ENCODE measurements at regions of chr13 and their contacts with region 1.

Region 1: DNA sequence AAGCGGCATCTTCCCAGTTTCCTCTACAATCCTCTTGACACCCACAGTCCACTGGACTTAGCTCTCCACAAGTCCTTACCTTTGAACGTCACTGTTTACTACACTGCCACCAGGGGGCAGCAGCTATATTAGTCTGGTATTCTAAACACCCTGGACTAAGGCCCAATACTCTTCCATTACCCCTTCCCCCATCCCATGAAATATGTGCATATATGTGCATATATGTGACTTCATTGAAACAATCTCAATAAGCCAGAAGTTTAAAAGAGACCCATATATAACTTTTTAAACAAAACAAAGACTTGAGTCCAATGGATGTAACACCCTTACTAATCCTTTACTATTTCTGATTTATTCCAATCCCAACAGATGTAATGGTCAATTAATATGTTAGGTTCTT is 15.5 kb downstream of the GGACT start:
- DNase-seq: peak; percentile 58
- H3K4me3 ChIP-seq: no peak overlapping the region
- H3K27ac ChIP-seq: no peak overlapping the region
- H3K4me1 ChIP-seq: no peaks in the 10 kb centered on the region
- H3K27me3 ChIP-seq: no peaks in the 10 kb centered on the region
- CTCF ChIP-seq: peak; percentile 75
- EP300 ChIP-seq: no peak
- RAD21 ChIP-seq: peak; percentile 67

Region 2: DNA sequence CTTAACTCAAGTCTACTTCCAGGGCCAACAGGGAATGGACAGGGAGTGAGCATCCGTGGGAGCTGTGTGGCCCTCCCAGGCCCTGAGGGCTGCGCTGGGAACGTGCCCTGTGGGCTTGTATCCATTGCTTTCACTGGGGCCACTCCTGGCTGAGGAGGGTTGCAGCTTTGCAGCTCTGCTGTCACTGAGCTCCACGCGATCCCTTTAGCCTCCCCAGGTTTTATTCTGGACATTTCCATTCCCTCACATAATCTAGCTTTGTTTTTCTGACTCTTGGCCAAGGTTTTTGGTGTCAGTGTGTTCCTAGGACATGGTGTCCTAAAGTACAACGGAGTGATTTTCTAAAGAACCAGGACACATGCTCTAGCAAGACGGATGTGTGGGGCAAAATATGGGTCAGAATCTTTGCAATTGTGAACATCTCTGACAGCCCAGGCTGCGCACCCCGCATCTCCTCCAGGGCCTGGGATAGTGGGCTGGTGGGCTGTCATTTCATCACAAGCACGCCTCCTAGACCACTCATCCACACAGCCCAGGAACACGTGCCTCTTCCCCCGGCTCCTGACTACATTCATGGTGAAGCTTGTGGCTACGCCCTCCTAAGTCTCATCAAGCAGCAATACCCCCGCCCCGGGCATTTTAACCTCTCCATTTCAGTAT is 12.5 kb before region 1 on chr13:
- CTCF ChIA-PET with region 1: interaction called, 10 read pairs
- POLR2A ChIA-PET with region 1: no interaction called
- DNase-seq: no peak
- H3K4me3 ChIP-seq: no peak overlapping the region
- H3K27ac ChIP-seq: no peak overlapping the region
- H3K4me1 ChIP-seq: no peaks in the 10 kb centered on the region; a peak in 1 of 4 replicates
- H3K27me3 ChIP-seq: no peaks in the 10 kb centered on the region
- CTCF ChIP-seq: no peak
- EP300 ChIP-seq: no peak
- RAD21 ChIP-seq: no peak

Region 3: DNA sequence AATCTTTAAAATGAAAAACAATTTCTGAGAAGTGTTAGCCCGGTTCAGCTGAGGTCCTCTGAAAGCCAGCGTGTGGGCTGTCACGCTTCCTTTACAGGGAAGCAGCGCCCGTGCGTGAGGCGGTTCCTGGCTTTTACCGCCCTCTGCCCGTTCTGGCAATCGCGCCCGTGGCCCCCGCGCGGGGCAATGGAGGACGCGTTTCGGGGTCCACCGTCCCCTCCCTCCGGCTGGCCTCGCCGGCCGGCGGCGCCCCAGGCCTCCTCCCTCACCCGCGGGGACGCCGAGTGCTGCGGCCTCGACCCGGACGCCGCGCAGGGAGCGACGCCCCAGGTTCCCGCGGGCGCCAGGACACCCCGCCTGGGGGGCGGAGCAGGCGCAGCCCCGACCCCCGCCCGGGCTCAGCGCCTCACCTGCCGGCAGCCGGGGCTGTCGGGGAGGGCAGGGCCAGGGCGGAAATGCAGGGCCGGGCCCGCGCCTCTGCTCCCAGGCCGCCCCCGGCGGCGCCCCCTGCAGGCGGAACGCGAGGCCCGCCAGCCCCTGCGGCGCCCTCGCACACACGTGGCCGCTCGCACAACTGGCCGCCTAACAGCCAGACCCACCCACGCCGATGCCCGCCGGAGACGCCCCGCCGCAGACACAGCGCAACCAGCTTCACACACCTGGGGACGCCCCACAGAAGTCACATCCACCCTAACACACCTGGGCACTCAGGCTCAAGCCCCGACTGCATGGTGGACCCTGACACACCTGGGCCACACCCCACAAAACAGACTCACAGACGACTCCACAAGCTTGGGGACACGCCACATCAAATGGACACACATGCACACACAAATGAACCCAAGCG is 15.4 kb after region 1 on chr13 and contains the start of gene GGACT:
- CTCF ChIA-PET with region 1: interaction called, 30 read pairs
- POLR2A ChIA-PET with region 1: no interaction called
- DNase-seq: peak; percentile 95
- H3K4me3 ChIP-seq: peak within 1 kb of the TSS; percentile 72 to 74
- H3K27ac ChIP-seq: peak within 1 kb of the TSS in 1 of 2 experiments; percentile 5; a peak in 1 of 4 replicates
- H3K4me1 ChIP-seq: peaks cover 0 to 5% of the 10 kb centered on the region in 2 experiments; a peak in 1 of 4 replicates
- H3K27me3 ChIP-seq: no peaks in the 10 kb centered on the region
- CTCF ChIP-seq: peak; percentile 65
- EP300 ChIP-seq: no peak
- RAD21 ChIP-seq: no peak
- polyA plus RNA-seq, gene GGACT: 5.4 and 7.1 TPM in 2 replicates

Region 4: DNA sequence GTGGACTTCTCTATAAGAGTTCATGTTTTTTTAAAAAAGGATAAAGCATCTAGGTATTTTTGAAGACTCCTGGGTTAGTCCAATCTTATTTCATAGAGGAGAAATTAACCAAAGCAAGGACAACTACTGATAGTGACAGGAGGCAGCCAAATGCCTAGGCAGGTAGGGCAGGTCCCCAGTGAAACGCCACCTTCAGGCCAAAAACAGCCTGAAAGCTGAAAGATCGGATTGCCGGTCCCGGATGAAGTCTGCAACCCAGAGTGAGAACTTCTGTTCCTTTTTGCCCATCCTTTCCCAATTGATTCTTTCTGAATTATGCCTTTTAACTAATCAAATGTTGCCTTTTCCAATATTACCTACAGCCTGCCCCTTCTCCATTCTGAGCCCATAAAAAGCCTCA is 21.6 kb after region 1 on chr13:
- CTCF ChIA-PET with region 1: interaction called, 30 read pairs
- POLR2A ChIA-PET with region 1: no interaction called
- DNase-seq: no peak
- H3K4me3 ChIP-seq: no peak overlapping the region
- H3K27ac ChIP-seq: no peak overlapping the region
- H3K4me1 ChIP-seq: no peaks in the 10 kb centered on the region
- H3K27me3 ChIP-seq: no peaks in the 10 kb centered on the region
- CTCF ChIP-seq: peak; percentile 20
- EP300 ChIP-seq: no peak
- RAD21 ChIP-seq: no peak

Region 5: GRCh38 chr13:100680131-100680530 is 107.0 kb after region 1 on chr13:
- CTCF ChIA-PET with region 1: no interaction called
- POLR2A ChIA-PET with region 1: no interaction called
- DNase-seq: no peak
- H3K4me3 ChIP-seq: no peak overlapping the region
- H3K27ac ChIP-seq: no peak overlapping the region
- H3K4me1 ChIP-seq: peaks cover 0 to 4% of the 10 kb centered on the region in 2 experiments; a peak in 1 of 4 replicates
- H3K27me3 ChIP-seq: 0 out of 2 replicates have a peak, but pooled peaks cover 6% of the 10 kb centered on the region
- CTCF ChIP-seq: no peak
- EP300 ChIP-seq: no peak
- RAD21 ChIP-seq: no peak

Region 6: DNA sequence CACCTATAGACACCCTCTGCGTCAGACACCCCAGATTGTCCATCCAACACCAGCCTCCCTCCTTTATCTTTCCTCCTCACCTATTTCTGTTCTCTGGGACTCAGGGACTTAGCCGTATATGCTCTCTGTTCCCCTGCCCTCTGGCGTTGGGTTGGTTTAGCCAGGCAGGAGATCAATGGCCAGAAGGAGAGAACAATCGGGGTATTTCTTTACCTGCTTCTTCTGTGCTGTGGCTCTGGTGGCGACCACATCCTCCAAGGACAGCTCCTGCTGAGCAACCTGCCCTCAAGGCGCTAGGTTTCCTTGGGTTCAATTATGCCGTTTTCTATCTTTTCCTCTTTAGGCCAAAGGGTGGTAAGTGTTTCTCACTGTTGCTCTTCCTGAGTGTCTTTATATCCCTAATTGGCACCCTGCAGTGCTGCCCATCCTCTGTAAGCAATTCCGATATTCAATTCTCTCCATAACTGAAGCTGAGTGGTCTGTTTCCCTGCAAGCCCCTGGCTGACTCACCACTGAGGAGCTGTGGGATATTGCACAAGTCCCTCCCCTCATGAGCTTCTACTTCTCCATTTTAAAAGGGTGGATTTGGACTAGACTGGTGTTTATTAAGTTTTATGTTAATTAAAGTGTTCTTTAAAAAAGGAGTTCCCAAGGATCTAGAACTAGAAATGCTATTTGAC is 165.2 kb after region 1 on chr13:
- CTCF ChIA-PET with region 1: no interaction called
- POLR2A ChIA-PET with region 1: no interaction called
- DNase-seq: no peak
- H3K4me3 ChIP-seq: no peak overlapping the region
- H3K27ac ChIP-seq: no peak overlapping the region
- H3K4me1 ChIP-seq: no peaks in the 10 kb centered on the region
- H3K27me3 ChIP-seq: no peaks in the 10 kb centered on the region; the same call in 1 of the 2 replicates
- CTCF ChIP-seq: no peak
- EP300 ChIP-seq: no peak
- RAD21 ChIP-seq: no peak

Region 7: GRCh38 chr13:100892981-100893380 is 319.9 kb after region 1 on chr13:
- CTCF ChIA-PET with region 1: no interaction called
- POLR2A ChIA-PET with region 1: no interaction called
- DNase-seq: no peak
- H3K4me3 ChIP-seq: no peak overlapping the region
- H3K27ac ChIP-seq: no peak overlapping the region
- H3K4me1 ChIP-seq: no peaks in the 10 kb centered on the region
- H3K27me3 ChIP-seq: no peaks in the 10 kb centered on the region
- CTCF ChIP-seq: no peak
- EP300 ChIP-seq: no peak
- RAD21 ChIP-seq: no peak